ENCODE measurements at regions of chrX and their contacts with region 1.

Region 1: DNA sequence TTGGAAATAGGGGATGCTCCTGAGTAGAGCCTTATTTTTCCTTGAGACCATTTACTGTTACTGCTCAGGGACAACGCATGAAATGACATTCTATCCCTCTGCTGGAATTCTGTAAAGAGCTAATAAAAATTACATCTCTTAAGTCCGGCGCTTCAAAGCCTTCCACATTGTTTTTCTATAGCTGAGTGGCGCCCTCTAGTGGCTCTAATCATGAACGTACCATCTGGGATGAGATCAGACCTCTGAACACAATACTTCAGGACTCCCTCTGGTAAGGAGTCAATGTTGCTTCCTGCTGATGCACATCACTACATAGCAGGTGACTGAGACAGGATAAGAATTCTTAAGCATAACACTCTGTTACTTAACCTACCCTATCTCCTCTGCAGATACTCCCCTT is 6.0 kb downstream of the HMGN5 start:
- DNase-seq: peak in 1 of 2 donors; percentile 37
- H3K4me3 ChIP-seq: no peak overlapping the region
- H3K27ac ChIP-seq: no peak overlapping the region
- H3K4me1 ChIP-seq: no peaks in the 10 kb centered on the region
- H3K27me3 ChIP-seq: no peaks in the 10 kb centered on the region
- CTCF ChIP-seq: peak in 1 of 2 experiments; percentile 31

Region 2: GRCh38 chrX:79719568-79720231 is 1476.0 kb before region 1 on chrX:
- intact Hi-C with region 1: no loop called
- DNase-seq: no peak
- H3K4me3 ChIP-seq: no peak overlapping the region
- H3K27ac ChIP-seq: no peak overlapping the region
- H3K4me1 ChIP-seq: no peaks in the 10 kb centered on the region
- H3K27me3 ChIP-seq: no peaks in the 10 kb centered on the region
- CTCF ChIP-seq: no peak

Region 3: DNA sequence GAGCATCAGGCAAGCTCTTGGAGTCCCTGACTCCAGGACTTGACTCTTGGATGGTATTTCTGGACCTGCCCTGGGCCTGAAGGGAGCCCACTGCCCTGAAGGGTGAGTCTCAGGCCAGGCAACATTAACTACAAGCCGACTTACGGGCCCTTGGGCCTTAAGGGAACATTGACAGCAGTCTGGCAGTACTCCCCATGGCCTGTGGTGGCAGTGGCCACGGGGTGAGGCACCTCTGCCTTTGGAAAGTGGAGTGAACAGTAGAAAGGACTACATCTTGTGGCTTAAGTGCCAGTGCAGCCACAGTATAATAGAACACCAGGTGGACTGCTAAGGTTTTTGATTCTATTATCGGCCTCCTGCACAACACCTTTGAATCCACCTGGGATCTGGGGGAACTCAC is 42.5 kb after region 1 on chrX:
- intact Hi-C with region 1: no loop called
- DNase-seq: no peak
- H3K4me3 ChIP-seq: no peak overlapping the region
- H3K27ac ChIP-seq: no peak overlapping the region
- H3K4me1 ChIP-seq: peaks cover 0 to 7% (median 1%) of the 10 kb centered on the region in 4 donors
- H3K27me3 ChIP-seq: no peaks in the 10 kb centered on the region
- CTCF ChIP-seq: no peak

Region 4: GRCh38 chrX:81377329-81377728 is 181.6 kb after region 1 on chrX:
- intact Hi-C with region 1: loop called (anchors 10 kb)
- DNase-seq: no peak
- H3K4me3 ChIP-seq: no peak overlapping the region
- H3K27ac ChIP-seq: no peak overlapping the region
- H3K4me1 ChIP-seq: no peaks in the 10 kb centered on the region
- H3K27me3 ChIP-seq: no peaks in the 10 kb centered on the region
- CTCF ChIP-seq: peak; percentile 46 to 58